ENCODE measurements at regions of chr13 and their contacts with region 1.

Region 1: DNA sequence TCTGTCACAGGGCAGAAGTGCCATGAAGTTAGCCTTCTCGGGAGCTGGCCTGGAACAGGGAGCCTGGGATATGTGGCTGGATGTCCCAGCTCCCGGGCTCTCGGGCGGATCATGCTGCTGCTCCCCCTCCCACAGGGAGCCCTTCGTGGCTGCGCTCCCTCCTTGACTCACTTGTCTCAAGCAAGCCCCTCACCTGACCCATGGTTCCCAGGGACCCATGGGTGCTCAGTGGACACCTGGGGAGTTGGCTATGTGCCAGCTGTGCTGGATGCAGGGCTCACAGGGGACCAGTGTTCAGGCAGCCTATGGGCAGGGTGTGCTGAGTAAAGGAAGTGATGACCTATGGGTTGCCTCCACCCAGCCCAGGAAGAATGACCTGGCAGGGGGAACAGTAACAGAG is 213.1 kb upstream of the SGCG start:
- DNase-seq: peak in 2 of 4 donors; percentile 19 to 28
- ATAC-seq: no peak
- H3K4me3 ChIP-seq: no peak overlapping the region
- H3K27ac ChIP-seq: no peak overlapping the region
- H3K4me1 ChIP-seq: no peaks in the 10 kb centered on the region
- H3K27me3 ChIP-seq: no peaks in the 10 kb centered on the region
- CTCF ChIP-seq: no peak
- POLR2A ChIP-seq: no peak

Region 2: DNA sequence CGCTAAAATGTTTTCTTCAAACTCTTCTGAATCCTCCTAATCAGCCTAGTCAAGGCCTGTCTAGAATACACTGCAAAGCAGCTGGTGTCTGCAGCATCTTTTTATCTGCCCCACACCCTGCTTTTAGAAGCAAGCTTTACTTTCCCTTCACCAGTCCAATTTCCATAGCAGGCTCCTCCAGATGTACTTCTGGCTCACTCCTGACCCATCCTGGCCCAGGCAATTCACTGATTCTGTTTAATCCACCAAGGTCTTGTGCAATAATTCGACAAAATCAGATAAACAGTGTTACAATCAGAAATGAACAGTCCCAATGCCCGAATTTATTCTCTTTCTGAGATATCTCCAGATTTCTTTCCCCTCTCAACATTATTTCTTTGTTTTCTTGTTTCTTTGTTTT is 202.1 kb before region 1 on chr13:
- intact Hi-C with region 1: no loop called
- DNase-seq: no peak
- ATAC-seq: no peak
- H3K4me3 ChIP-seq: no peak overlapping the region
- H3K27ac ChIP-seq: no peak overlapping the region
- H3K4me1 ChIP-seq: no peaks in the 10 kb centered on the region
- H3K27me3 ChIP-seq: no peaks in the 10 kb centered on the region
- CTCF ChIP-seq: no peak
- POLR2A ChIP-seq: no peak

Region 3: DNA sequence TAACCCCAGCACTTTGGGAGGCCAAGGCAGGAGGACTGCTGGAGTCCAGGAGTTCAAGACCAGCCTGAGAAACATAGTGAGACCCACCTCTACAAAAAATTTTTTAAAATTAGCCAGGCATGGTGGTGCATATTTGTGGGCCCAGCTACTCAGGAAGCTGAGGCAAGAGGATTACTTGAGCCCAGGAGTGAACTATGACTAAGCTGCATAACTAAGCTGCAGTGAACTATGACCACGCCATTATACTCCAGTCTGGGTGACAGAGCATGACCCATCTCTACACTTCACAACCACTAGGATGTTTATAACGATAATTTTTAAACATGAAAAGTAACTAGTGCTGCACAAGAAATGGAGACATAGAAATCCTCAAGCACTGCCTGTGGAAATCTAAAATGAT is 139.6 kb before region 1 on chr13:
- intact Hi-C with region 1: no loop called
- DNase-seq: no peak
- ATAC-seq: no peak
- H3K4me3 ChIP-seq: no peak overlapping the region
- H3K27ac ChIP-seq: no peak overlapping the region
- H3K4me1 ChIP-seq: no peaks in the 10 kb centered on the region
- H3K27me3 ChIP-seq: no peaks in the 10 kb centered on the region
- CTCF ChIP-seq: no peak
- POLR2A ChIP-seq: no peak

Region 4: GRCh38 chr13:22993148-22993547 is 25.5 kb after region 1 on chr13:
- intact Hi-C with region 1: loop called (anchors 2 kb)
- DNase-seq: no peak
- ATAC-seq: no peak
- H3K4me3 ChIP-seq: no peak overlapping the region
- H3K27ac ChIP-seq: no peak overlapping the region
- H3K4me1 ChIP-seq: no peaks in the 10 kb centered on the region
- H3K27me3 ChIP-seq: no peaks in the 10 kb centered on the region
- CTCF ChIP-seq: no peak
- POLR2A ChIP-seq: no peak

Region 5: GRCh38 chr13:23752111-23753001 is 784.7 kb after region 1 on chr13:
- intact Hi-C with region 1: no loop called
- DNase-seq: no peak
- ATAC-seq: no peak
- H3K4me3 ChIP-seq: no peak overlapping the region
- H3K27ac ChIP-seq: no peak overlapping the region
- H3K4me1 ChIP-seq: no peaks in the 10 kb centered on the region
- H3K27me3 ChIP-seq: no peaks in the 10 kb centered on the region
- CTCF ChIP-seq: no peak
- POLR2A ChIP-seq: no peak